ENCODE measurements at regions of chr2 and their contacts with region 1.

Region 1: DNA sequence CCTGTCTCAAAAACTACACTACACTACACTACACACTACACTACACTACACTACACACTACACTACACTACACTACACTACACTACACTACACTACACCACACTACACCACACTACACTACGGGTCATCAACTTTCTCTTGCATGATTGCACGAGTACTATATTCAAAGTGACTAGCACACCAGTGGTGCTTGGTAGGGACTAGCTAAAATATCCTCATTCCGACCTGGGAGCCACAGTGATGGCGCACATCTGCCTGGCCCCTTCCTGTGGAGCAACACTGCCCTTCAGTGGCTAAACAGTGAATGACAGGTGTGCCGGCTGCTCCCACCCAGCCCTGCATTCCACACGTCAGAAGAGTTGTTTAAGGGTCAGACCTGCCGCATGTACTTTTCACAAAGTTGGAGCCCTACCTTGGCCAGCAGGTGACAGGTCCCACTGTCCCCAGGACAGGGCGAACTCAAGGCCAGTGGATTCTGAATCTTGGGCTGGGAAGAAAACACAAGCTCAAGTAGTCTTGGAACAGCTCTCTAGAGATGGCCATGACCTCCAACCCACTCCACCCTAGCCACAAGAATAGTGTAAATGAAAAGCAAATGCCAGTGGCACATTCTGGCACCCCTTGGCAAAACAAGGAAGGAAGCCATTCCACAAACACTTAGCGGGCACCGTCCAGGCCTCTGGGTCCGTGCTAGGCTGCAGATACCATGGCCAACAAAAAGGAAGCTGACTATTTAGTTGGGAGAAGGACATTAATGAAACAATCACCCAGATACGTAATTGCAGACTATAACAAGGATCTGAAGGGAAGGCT is 79.7 kb upstream of the MSH2 start:
- H3K4me3 ChIP-seq: no peak overlapping the region
- H3K27ac ChIP-seq: no peak overlapping the region
- H3K4me1 ChIP-seq: peaks cover 3% of the 10 kb centered on the region; the same call in 1 of the 2 replicates
- CTCF ChIP-seq: peak; percentile 96

Region 2: GRCh38 chr2:46915811-46916630 is 407.2 kb before region 1 on chr2:
- CTCF ChIA-PET with region 1: interaction called, 17 read pairs
- POLR2A ChIA-PET with region 1: no interaction called
- H3K4me3 ChIP-seq: peak overlapping the region; percentile 95
- H3K27ac ChIP-seq: peak overlapping the region; percentile 87
- H3K4me1 ChIP-seq: peaks cover 4% of the 10 kb centered on the region
- CTCF ChIP-seq: no peak

Region 3: DNA sequence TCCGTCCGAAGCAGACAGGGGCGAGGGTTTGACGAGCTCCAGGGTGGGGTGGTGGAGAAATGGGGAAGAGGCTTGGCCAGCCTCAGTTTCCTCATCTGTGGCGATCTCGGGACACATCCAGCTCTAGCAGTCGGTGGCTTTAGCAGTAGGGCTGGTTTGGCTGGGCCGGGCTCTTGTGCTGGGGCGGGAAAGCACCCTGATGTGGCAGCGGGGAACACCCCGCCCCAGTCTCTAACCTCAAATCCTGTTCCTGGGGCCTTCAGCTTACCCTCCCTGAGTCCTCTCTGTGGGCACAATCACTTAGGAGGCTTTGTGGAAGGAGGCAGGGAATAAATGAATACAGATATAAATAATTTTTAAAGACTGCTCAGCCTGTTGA is 381.1 kb before region 1 on chr2:
- CTCF ChIA-PET with region 1: interaction called, 11 read pairs
- POLR2A ChIA-PET with region 1: interaction called, 6 read pairs
- H3K4me3 ChIP-seq: peak overlapping the region; percentile 84
- H3K27ac ChIP-seq: peak overlapping the region; percentile 82; the same call in 1 of the 2 replicates
- H3K4me1 ChIP-seq: peaks cover 3% of the 10 kb centered on the region
- CTCF ChIP-seq: no peak

Region 4: DNA sequence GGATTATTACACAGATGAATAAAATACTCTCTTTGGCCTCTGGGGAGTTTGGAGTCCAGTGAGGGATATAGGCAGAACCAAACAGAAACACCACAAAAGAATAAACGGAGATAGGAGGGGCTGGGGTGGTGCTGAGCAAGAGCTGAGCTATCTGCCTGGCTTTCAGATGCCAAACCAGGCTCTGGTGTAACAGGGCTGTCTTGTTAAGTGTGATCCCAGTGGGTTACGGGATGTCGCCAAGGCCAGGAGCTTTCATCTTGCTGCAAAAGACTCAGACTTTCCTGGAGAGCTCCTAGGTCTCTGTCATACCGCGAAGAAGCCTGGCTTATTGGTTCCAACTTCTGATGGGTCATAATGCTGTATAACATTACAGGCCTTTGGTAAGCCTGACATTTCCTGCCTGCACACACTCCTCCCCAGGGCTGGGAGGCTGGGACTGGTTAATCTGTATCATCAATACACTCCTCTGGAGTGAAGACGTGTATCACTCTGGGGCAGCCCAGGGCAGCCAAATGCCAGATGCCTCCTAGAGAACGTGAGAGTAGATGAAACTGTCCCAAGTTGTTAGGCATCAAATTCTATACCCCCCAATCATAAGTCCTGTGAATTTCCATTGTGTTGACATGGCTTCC is 228.6 kb before region 1 on chr2:
- CTCF ChIA-PET with region 1: no interaction called
- POLR2A ChIA-PET with region 1: no interaction called
- H3K4me3 ChIP-seq: no peak overlapping the region
- H3K27ac ChIP-seq: no peak overlapping the region
- H3K4me1 ChIP-seq: no peaks in the 10 kb centered on the region
- CTCF ChIP-seq: no peak

Region 5: GRCh38 chr2:47174733-47175361 is 148.4 kb before region 1 on chr2:
- CTCF ChIA-PET with region 1: interaction called, 20 read pairs
- POLR2A ChIA-PET with region 1: interaction called, 7 read pairs
- H3K4me3 ChIP-seq: peak overlapping the region; percentile 92
- H3K27ac ChIP-seq: peak overlapping the region; percentile 97
- H3K4me1 ChIP-seq: peaks cover 27% of the 10 kb centered on the region
- CTCF ChIP-seq: no peak

Region 6: DNA sequence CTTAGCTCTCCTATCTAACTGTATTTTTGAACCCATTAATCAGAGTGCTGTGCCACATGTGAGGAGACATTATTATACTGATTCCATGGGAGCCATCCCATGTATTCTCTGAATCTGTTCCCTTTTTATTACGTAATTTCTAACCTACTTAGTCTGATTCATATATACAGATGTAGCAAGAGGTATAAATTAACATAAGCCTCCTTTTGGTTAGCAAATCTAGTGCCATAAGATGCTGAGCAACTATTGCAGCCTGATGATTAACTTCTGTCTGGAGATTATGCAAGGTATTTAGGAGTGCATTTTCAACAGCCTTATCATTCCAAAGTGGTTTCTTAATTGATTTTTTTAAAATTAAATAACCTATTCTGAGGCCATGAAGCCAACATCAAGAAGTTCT is 34.4 kb before region 1 on chr2:
- CTCF ChIA-PET with region 1: no interaction called
- POLR2A ChIA-PET with region 1: no interaction called
- H3K4me3 ChIP-seq: no peak overlapping the region
- H3K27ac ChIP-seq: no peak overlapping the region
- H3K4me1 ChIP-seq: peaks cover 3% of the 10 kb centered on the region; the same call in 1 of the 2 replicates
- CTCF ChIP-seq: no peak

Region 7: DNA sequence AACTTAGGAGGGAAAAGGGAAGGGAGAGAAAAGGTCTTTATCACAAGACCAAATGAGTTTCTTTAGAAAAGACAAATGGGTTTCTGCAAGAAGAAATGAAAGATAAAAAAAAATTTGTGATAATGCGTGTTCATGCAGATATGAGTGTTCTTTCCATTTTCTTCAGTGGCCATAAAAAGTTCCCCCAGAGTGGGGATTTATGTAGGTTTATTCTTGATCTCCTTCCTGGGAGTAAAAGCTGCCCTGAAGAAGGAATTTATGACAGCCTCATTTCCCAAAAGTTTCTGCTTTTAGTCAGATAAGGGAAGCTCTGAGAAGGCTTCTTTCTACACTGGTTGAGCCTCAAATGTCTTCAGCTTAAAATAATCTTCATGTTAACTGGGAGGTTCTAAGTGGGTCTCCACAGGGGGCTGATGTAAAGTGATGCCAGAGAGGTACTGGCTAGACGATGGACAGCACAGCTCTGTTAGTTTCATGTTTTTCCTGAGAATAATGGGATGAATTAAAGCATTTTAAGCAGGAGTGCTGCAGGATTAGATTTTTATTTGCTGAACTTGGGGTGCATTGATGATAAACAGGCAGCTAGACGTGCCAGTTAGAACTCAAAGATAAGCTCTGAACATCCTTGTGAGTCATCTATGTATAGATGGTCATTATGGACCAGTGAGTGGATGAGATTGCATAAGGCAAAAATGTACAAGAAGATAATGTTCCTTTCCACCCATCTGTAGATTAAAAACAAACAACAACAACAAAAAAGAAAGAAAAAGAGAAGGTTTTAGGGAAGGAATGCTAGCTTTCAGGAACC is 19.7 kb before region 1 on chr2:
- CTCF ChIA-PET with region 1: interaction called, 15 read pairs
- POLR2A ChIA-PET with region 1: no interaction called
- H3K4me3 ChIP-seq: no peak overlapping the region
- H3K27ac ChIP-seq: no peak overlapping the region
- H3K4me1 ChIP-seq: peaks cover 18% of the 10 kb centered on the region
- CTCF ChIP-seq: no peak

Region 8: DNA sequence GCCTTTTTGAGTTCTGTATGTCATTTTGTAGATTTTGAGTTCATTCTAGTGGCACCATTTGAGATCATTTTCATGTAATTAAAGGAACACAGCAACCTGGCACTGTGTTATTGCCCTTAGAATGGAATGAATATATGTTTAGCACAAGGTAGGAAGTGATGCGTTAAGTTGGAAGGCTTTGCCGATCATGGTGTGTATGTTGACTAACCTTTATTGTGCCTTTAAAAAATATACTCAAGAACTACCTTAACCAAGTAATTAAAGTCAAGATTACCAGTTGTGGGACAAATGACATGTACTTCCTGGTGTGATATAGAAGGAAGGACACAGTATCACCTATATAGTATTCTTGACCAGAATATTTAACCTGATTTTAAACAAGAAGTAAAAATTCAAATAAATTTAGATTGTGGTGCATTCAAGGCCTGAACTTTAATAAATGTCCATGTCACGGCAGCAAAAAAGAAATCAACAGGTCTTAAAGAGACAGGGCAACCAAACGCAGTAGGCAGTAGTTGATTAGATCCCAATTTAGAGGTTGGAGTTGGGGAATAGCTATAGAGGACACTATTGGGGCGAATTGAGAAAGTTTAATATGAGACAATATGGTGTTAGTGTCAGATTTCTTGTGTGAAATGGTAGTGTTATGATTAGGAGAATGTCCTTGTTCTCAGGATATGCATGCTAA is 148.4 kb after region 1 on chr2:
- CTCF ChIA-PET with region 1: no interaction called
- POLR2A ChIA-PET with region 1: no interaction called
- H3K4me3 ChIP-seq: no peak overlapping the region
- H3K27ac ChIP-seq: no peak overlapping the region
- H3K4me1 ChIP-seq: no peaks in the 10 kb centered on the region
- CTCF ChIP-seq: no peak

Region 9: GRCh38 chr2:47486841-47487497 is 163.8 kb after region 1 on chr2:
- CTCF ChIA-PET with region 1: no interaction called
- POLR2A ChIA-PET with region 1: no interaction called
- H3K4me3 ChIP-seq: no peak overlapping the region
- H3K27ac ChIP-seq: no peak overlapping the region
- H3K4me1 ChIP-seq: no peaks in the 10 kb centered on the region
- CTCF ChIP-seq: no peak